T-cell (primary cell): ENCODE measurements at regions of chr16 and their contacts with region 1.

Region 1: DNA sequence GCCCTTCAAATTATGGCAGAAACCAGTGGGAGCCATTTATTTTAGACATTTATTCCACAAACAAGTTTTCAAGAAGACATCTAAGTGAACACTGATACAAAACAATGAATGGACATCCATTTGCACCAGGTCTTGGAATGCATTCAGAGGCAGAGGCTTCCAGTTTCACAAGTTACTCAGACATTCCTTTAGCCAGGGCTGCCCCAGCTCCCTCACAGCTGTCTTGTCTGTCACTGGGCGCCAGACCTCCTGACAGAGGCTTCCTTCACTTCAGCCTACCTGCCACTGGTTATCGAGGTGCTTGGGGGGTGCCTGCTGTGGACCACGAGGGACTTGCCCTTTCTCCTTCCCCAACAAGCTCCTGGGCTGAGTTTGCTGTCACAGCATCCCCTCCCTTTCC is 19.2 kb downstream of the AQP8 start:
- DNase-seq: no peak
- ATAC-seq: no peak
- H3K4me3 ChIP-seq: no peak overlapping the region
- H3K4me3 Mint-ChIP-seq: no peak overlapping the region
- H3K27ac ChIP-seq: no peak overlapping the region
- H3K27ac Mint-ChIP-seq: no peak overlapping the region
- H3K4me1 ChIP-seq: peaks cover 0 to 5% of the 10 kb centered on the region in 2 experiments
- H3K4me1 Mint-ChIP-seq: peaks cover 0 to 4% (median 0%) of the 10 kb centered on the region in 3 donors
- H3K27me3 ChIP-seq: peaks cover 0 to 3% of the 10 kb centered on the region in 2 experiments
- H3K27me3 Mint-ChIP-seq: no peaks in the 10 kb centered on the region

Region 2: GRCh38 chr16:24988593-24989338 is 247.2 kb before region 1 on chr16:
- CTCF ChIA-PET with region 1: no interaction called
- POLR2A ChIA-PET with region 1: no interaction called
- DNase-seq: peak in 1 of 35 experiments; percentile 8
- ATAC-seq: peak in 2 of 4 experiments; percentile 37 to 55
- H3K4me3 ChIP-seq: no peak overlapping the region
- H3K4me3 Mint-ChIP-seq: no peak overlapping the region
- H3K27ac ChIP-seq: no peak overlapping the region
- H3K27ac Mint-ChIP-seq: peak overlapping the region; percentile 11 to 50
- H3K4me1 ChIP-seq: peaks cover 3 to 27% of the 10 kb centered on the region in 2 experiments
- H3K4me1 Mint-ChIP-seq: peaks cover 82 to 91% (median 86%) of the 10 kb centered on the region in 3 donors
- H3K27me3 ChIP-seq: no peaks in the 10 kb centered on the region
- H3K27me3 Mint-ChIP-seq: no peaks in the 10 kb centered on the region

Region 3: GRCh38 chr16:25064937-25065336 is 171.1 kb before region 1 on chr16:
- CTCF ChIA-PET with region 1: interaction called, 9 to 11 read pairs
- POLR2A ChIA-PET with region 1: no interaction called
- DNase-seq: no peak
- ATAC-seq: no peak
- H3K4me3 ChIP-seq: no peak overlapping the region
- H3K4me3 Mint-ChIP-seq: peak overlapping the region in 1 of 3 donors; percentile 57
- H3K27ac ChIP-seq: no peak overlapping the region
- H3K27ac Mint-ChIP-seq: peak overlapping the region in 1 of 2 donors; percentile 95
- H3K4me1 ChIP-seq: peaks cover 33 to 71% of the 10 kb centered on the region in 2 experiments
- H3K4me1 Mint-ChIP-seq: peaks cover 69 to 70% (median 69%) of the 10 kb centered on the region in 3 donors
- H3K27me3 ChIP-seq: no peaks in the 10 kb centered on the region
- H3K27me3 Mint-ChIP-seq: no peaks in the 10 kb centered on the region

Region 4: DNA sequence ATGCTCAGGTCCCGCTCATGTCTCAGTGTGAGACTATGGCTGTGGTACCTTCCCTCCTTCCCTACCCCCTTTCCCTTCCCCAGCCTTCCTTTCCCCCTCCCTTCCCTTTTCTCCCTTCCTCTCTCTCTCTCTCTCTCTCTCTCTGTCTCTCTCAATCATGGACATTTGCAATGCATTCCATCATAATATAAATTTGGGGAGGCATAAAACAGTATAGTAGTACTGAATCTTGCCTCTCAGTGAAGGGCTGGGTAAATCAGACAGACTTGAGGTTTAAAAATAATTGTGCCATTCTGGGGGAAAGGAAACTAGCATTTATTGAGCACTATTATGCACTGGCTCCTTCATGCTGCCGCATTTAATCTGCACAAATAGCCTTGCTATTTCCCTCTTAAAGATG is 17.3 kb after region 1 on chr16:
- CTCF ChIA-PET with region 1: interaction called in 1 of 2 experiments, 10 read pairs
- POLR2A ChIA-PET with region 1: interaction called in 1 of 2 experiments, 4 read pairs
- DNase-seq: no peak
- ATAC-seq: no peak
- H3K4me3 ChIP-seq: no peak overlapping the region
- H3K4me3 Mint-ChIP-seq: no peak overlapping the region
- H3K27ac ChIP-seq: no peak overlapping the region
- H3K27ac Mint-ChIP-seq: peak overlapping the region in 1 of 2 donors; percentile 41
- H3K4me1 ChIP-seq: peaks cover 6 to 17% of the 10 kb centered on the region in 2 experiments
- H3K4me1 Mint-ChIP-seq: peaks cover 28 to 33% (median 30%) of the 10 kb centered on the region in 3 donors
- H3K27me3 ChIP-seq: no peaks in the 10 kb centered on the region
- H3K27me3 Mint-ChIP-seq: no peaks in the 10 kb centered on the region

Region 5: DNA sequence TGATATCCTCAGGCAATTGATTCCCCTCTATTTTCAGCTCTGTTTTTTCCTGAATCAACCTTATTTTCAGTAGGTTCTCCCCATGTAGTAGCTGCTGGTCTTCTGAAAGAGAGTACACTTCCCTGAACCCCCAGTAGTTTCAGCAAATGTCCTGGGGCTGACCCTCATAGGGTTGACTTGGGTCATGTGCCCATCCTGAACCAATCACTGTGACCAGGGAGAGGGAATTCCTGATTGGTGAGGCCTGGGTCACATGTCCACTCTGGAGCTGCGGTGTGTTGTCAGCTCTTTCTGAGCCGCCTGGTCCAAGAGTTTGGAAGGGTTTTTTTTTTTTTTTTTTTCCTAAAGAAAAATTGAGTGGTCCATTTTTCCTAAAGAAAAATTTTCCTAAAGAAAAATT is 30.0 kb after region 1 on chr16:
- CTCF ChIA-PET with region 1: no interaction called
- POLR2A ChIA-PET with region 1: no interaction called
- DNase-seq: no peak
- ATAC-seq: no peak
- H3K4me3 ChIP-seq: no peak overlapping the region
- H3K4me3 Mint-ChIP-seq: no peak overlapping the region
- H3K27ac ChIP-seq: no peak overlapping the region
- H3K27ac Mint-ChIP-seq: no peak overlapping the region
- H3K4me1 ChIP-seq: no peaks in the 10 kb centered on the region
- H3K4me1 Mint-ChIP-seq: peaks cover 26 to 37% (median 30%) of the 10 kb centered on the region in 3 donors
- H3K27me3 ChIP-seq: no peaks in the 10 kb centered on the region
- H3K27me3 Mint-ChIP-seq: no peaks in the 10 kb centered on the region

Region 6: GRCh38 chr16:25279491-25279890 is 43.5 kb after region 1 on chr16:
- CTCF ChIA-PET with region 1: interaction called in 1 of 2 experiments, 3 read pairs
- POLR2A ChIA-PET with region 1: interaction called in 1 of 2 experiments, 11 read pairs
- DNase-seq: no peak
- ATAC-seq: no peak
- H3K4me3 ChIP-seq: no peak overlapping the region
- H3K4me3 Mint-ChIP-seq: no peak overlapping the region
- H3K27ac ChIP-seq: no peak overlapping the region
- H3K27ac Mint-ChIP-seq: no peak overlapping the region
- H3K4me1 ChIP-seq: no peaks in the 10 kb centered on the region
- H3K4me1 Mint-ChIP-seq: no peaks in the 10 kb centered on the region
- H3K27me3 ChIP-seq: peaks cover 0 to 3% of the 10 kb centered on the region in 2 experiments
- H3K27me3 Mint-ChIP-seq: peaks cover 0 to 4% of the 10 kb centered on the region in 2 donors